ENCODE measurements at regions of chr7 and their contacts with region 1.

Region 1: GRCh38 chr7:84455788-84456187 is 261.2 kb upstream of the SEMA3A start:
- ATAC-seq: peak in 3 of 8 experiments; percentile 15 to 69 (median 48)
- H3K4me3 ChIP-seq: no peak overlapping the region
- H3K27ac ChIP-seq: no peak overlapping the region
- H3K4me1 ChIP-seq: peaks cover 0 to 7% of the 10 kb centered on the region in 2 donors

Region 2: GRCh38 chr7:83957333-83957732 is 498.5 kb before region 1 on chr7:
- in situ Hi-C with region 1: loop called in 1 of 9 experiments (anchors 25 kb)
- ATAC-seq: peak in 2 of 8 experiments; percentile 36 to 65
- H3K4me3 ChIP-seq: no peak overlapping the region
- H3K27ac ChIP-seq: no peak overlapping the region
- H3K4me1 ChIP-seq: no peaks in the 10 kb centered on the region

Region 3: DNA sequence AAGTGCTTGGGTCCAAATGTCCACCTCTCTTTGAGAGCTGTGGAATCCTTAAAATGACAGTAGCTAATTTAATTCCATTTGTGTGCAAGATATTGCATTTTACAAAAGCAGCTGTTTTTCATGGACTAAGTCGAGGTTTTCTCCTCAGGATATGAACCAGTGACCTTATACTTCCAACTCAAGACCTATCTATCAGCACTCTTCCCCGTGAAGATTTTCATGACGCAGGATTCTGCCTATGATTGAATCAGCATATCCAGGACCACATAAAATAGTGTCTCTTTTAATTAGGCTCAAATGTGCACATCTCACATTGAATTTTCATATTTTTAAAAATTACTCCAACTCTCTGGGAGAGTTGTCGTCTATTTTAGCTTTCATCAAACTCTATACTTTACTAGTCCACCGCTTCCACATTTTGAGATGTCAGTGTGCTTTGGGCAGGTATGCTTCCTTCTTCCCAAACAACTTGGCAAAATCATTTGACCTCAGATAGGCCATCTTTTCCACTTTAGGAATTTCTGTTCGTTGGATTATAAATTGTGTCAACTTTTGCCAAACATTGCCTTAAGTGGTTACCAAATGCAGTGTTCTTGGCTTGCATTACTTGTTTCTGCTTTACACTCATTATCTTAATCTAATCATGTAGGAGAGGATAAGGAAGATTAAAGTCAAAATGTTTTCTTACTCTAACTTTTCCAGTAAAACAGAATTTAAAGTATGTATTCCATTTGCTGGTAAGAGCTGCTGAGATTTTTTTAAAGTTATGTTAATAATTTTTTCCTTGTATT is 300.6 kb before region 1 on chr7:
- in situ Hi-C with region 1: no loop called
- ATAC-seq: no peak
- H3K4me3 ChIP-seq: no peak overlapping the region
- H3K27ac ChIP-seq: no peak overlapping the region
- H3K4me1 ChIP-seq: peaks cover 0 to 7% of the 10 kb centered on the region in 2 donors

Region 4: DNA sequence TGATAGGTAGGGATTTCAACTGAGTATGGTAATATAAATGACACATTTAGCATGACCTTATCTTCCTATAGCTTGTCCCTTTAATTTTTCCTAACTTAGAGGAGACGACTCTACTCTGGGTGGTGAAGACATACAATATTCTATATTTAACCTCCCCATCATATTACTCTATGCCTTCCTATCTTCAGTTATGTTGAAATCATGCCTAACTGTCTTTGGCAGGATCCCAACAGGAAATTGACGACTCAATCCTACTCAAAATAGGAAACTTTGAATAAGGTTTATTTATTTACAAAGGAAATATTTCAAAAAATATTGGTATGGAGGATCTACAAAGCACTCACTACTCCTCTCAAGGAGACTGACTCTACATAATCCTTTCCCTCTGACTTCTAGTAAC is 237.1 kb before region 1 on chr7:
- in situ Hi-C with region 1: loop called in 1 of 9 experiments (anchors 25 kb)
- ATAC-seq: no peak
- H3K4me3 ChIP-seq: no peak overlapping the region
- H3K27ac ChIP-seq: no peak overlapping the region
- H3K4me1 ChIP-seq: peaks cover 4 to 7% of the 10 kb centered on the region in 2 donors

Region 5: GRCh38 chr7:84904561-84904960 is 448.8 kb after region 1 on chr7:
- in situ Hi-C with region 1: no loop called
- ATAC-seq: no peak
- H3K4me3 ChIP-seq: no peak overlapping the region
- H3K27ac ChIP-seq: no peak overlapping the region
- H3K4me1 ChIP-seq: no peaks in the 10 kb centered on the region